Mammary epithelial cell (primary cell): ENCODE measurements at regions of chr2 and their contacts with region 1.

Region 1: DNA sequence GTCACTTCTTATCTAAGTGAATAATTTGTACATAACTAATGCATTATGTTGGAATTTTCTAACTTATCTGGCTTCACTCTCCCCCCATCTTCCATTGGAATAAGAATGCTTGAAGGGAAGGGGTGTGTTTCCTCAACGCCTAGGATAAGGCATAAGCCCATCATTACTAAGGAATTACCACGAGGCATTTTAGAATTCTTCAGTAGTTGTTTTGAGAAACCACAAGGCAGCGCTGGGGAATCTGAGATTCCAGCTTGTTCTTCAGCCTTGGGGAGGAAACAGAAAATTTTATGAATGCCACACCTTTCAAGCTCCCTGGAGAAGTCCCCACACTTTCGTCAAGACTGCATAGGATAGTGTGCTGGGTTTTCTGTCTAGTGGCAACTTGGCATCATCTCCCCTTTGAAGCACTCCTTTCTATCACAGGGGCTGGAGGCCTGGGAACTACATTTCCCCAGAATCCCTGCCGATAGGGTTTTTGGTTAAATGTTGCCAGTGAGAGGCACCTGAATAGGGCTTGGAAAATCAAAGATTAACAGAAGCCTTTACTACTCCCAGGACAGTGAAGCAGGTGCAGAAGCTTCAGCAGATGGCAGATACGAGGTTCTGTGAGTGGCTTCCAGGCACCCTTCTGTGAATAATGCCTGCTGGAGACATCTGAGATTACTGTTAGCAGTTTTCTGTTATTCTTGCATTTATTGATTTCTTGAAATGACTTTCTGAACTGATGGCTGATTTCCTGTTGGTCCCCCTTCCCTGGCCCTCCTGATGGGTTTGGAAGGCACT is 192.7 kb upstream of the REV1 start:
- DNase-seq: no peak
- H3K4me3 ChIP-seq: no peak overlapping the region
- H3K27ac ChIP-seq: no peak overlapping the region
- H3K4me1 ChIP-seq: no peaks in the 10 kb centered on the region
- H3K27me3 ChIP-seq: peaks cover 4% of the 10 kb centered on the region
- CTCF ChIP-seq: no peak

Region 2: GRCh38 chr2:99715956-99716355 is 33.5 kb after region 1 on chr2:
- CTCF ChIA-PET with region 1: no interaction called
- dilution Hi-C with region 1: loop called (anchors 5 kb)
- in situ Hi-C with region 1: no loop called
- intact Hi-C with region 1: no loop called
- DNase-seq: no peak
- H3K4me3 ChIP-seq: no peak overlapping the region
- H3K27ac ChIP-seq: no peak overlapping the region
- H3K4me1 ChIP-seq: no peaks in the 10 kb centered on the region
- H3K27me3 ChIP-seq: peaks cover 7% of the 10 kb centered on the region
- CTCF ChIP-seq: no peak

Region 3: DNA sequence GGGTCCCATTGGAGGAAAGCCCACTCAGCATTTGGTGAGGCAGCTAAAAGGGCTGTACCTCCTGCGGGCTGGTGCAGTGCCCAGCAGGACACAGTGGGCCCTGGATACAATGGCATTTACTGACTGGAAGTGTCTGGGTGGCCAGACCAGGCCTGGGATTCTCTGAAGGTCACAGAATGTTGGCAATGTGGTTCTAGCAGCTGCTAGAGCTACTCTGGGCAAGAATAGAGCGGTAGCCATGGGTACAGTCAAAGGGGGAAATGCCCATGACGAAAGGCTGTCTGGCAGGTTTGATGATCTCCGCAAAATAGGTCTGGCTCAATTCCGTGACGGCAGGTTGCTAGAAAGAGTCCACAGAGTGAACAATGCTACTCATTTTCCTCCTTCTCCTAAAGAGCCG is 218.1 kb after region 1 on chr2:
- CTCF ChIA-PET with region 1: no interaction called
- dilution Hi-C with region 1: no loop called
- in situ Hi-C with region 1: no loop called
- intact Hi-C with region 1: no loop called
- DNase-seq: no peak
- H3K4me3 ChIP-seq: no peak overlapping the region
- H3K27ac ChIP-seq: no peak overlapping the region
- H3K4me1 ChIP-seq: no peaks in the 10 kb centered on the region
- H3K27me3 ChIP-seq: peaks cover 2% of the 10 kb centered on the region
- CTCF ChIP-seq: no peak